BJ (cell line): ENCODE measurements at regions of chr5 and their contacts with region 1.

Region 1: DNA sequence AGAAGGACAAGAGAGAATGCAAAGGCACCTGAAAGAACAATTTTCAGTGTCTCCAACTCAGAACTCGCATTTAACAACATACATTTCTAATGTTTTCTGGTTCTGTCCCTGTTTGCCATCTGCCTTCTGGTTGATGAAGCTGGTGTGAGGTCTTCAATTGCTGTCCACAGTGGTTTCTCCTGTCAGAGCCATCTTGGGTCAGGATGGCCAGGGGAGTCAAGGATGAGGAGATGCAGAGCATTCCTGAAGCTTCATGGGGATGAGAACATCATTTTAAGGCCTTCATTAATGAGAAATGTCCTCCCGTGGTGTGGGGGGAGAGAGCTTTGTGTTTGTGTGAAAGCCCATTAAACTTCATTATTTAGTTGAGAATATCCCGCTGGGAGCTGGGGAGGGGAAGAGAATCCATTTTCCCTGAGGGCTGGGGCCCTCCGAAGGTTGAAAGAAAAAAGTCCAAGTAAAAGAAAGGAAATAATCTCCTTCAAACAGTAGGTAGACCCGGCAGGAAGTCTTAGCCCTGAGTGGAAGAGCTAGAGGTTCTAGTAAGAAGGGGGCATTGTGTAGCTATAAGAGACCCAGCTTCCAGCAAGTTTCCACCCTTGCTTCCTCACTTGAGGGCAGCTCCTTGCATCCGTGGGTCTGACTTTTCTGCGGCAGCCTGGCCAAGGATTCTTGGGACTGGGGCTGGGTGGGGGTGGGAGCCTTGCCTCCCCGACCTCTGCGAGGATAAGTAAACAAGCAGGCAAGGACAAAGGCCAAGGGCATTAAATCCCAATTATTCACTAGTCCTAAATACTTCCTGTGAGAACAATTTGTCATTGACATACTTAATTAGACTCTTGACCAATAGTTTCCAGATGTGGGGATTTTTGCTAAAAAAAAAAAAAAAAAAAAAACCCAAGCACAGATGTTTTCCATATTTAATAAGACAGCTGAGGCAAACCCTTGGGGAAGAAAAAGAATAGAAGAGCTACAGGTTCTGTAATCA is 119.2 kb downstream of the MSX2 start:
- DNase-seq: no peak
- H3K4me3 ChIP-seq: no peak overlapping the region
- H3K27me3 ChIP-seq: no peaks in the 10 kb centered on the region; the same call in 1 of the 2 replicates
- CTCF ChIP-seq: no peak

Region 2: DNA sequence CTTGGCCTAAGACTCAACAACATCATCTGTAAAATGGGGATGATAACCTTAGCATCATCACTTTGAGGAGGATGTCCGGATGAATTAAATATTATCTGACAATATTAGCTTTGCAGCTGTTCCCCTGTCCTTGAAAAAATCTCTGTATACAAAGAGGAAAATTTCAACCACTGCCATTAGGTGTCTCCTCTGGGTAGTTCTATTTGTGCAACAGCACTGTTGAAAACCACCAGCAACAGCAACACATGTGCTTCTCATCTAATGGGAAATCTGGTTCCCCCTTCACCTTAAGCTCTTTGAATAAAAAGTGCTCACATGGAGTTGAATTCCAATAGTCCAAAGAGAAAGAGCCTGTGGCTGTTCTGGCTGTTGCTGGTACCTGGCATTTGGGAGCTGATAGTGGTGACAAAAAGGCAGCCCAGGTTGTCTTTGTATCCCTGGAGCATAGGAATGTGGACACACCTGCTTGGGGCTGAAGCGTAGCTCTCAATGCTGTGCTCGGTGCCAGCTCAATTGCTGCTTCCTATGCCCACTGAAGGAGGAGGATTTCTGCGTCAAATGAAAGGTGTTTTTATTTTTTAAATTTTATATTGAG is 441.2 kb before region 1 on chr5:
- CTCF ChIA-PET with region 1: no interaction called
- POLR2A ChIA-PET with region 1: interaction called, 18 read pairs
- DNase-seq: no peak
- H3K4me3 ChIP-seq: no peak overlapping the region
- H3K27me3 ChIP-seq: no peaks in the 10 kb centered on the region
- CTCF ChIP-seq: no peak

Region 3: DNA sequence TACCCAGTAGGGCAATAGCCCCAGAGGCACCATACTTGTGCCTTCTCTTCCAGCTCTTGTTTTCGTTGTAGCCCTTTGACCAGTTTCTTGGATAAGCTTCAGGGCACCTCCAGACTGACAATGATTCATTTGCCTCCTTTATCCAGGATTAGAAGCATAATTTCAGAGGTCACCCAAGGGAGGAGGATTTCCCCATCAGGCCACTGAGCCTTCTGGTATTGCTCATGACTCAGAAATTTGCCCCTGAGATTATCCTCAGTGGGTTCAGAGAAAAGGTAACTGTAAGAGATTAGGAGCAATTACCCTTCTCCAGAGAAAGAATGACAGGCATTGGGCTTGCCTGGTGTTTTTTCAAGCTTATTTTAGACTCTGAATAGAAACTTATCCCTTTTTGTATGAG is 28.7 kb after region 1 on chr5:
- CTCF ChIA-PET with region 1: no interaction called
- POLR2A ChIA-PET with region 1: no interaction called
- DNase-seq: no peak
- H3K4me3 ChIP-seq: no peak overlapping the region
- H3K27me3 ChIP-seq: no peaks in the 10 kb centered on the region
- CTCF ChIP-seq: no peak